ENCODE measurements at regions of chr12 and their contacts with region 1.

Region 1: DNA sequence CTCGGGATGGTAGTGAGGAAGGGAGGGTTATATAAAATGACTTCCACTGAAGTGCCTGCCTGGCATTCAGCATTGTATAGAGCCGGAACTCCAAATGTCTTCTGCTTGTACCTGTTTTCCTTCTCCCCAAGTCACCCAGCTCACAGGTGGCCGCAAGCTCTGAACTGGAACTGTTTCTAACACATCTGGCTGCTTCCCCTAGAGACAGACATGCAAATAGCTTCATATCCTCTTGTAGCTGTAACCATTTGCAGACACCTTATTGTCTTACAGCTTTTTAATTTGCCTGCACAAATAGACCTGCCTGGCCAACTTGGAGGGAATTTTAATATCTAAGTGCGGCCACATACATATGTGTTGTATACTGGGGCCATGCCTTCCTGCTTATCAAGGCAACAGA is 126.0 kb downstream of the CHST11 start:
- DNase-seq: no peak
- ATAC-seq: peak; percentile 66
- H3K4me3 ChIP-seq: no peak overlapping the region
- H3K4me1 ChIP-seq: peaks cover 3% of the 10 kb centered on the region
- CTCF ChIP-seq: no peak

Region 2: GRCh38 chr12:104456417-104456949 is 126.3 kb before region 1 on chr12 and contains the start of gene CHST11:
- intact Hi-C with region 1: loop called in 1 of 2 experiments (anchors 5 kb)
- DNase-seq: peak; percentile 70 to 87 (median 78)
- ATAC-seq: peak; percentile 79
- H3K4me3 ChIP-seq: peak within 1 kb of the TSS; percentile 43
- H3K4me1 ChIP-seq: peaks cover 6% of the 10 kb centered on the region
- CTCF ChIP-seq: no peak
- total RNA-seq, gene CHST11: 3.3 to 15.2 (median 6.6) TPM

Measured in mucosa of descending colon (tissue), 3 donors.